Cardiac septum (tissue), 1 donor: ENCODE measurements at regions of chr1 and their contacts with region 1.

Region 1: DNA sequence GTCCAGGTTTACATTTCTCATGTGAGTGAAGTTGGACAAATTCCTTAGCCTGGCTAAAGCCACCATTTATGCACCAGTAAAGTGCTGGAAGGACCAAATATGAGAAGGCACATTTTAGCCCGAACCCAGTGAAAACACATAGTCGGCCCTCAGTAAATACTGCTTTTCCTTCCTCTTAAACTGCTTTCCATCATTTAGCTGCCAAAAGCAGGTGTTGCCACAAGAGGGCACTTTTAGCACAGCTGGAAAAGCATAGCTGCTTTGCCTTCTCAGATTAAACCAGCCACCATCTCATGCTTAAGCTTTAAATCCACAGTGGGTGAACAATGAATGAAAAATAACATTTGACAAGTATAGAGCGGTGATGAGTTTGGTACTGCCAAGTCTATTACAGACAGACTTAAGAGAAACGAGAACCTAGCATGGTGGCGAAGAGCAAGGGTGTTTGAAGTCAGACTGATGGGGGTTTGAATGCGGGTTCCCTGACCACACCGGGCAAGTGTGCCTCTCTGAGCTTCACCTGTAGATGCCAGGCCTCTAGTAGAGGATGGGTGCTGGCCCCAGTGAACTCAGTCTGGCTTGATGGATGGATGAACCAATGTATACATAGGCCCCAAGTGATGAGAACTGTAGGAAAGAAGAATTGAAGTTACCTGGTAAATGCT is 57.8 kb downstream of the SLC35D1 start:
- DNase-seq: no peak

Region 2: GRCh38 chr1:67149179-67149770 is 153.1 kb after region 1 on chr1:
- intact Hi-C with region 1: loop called (anchors 1 kb)
- DNase-seq: no peak

Region 3: DNA sequence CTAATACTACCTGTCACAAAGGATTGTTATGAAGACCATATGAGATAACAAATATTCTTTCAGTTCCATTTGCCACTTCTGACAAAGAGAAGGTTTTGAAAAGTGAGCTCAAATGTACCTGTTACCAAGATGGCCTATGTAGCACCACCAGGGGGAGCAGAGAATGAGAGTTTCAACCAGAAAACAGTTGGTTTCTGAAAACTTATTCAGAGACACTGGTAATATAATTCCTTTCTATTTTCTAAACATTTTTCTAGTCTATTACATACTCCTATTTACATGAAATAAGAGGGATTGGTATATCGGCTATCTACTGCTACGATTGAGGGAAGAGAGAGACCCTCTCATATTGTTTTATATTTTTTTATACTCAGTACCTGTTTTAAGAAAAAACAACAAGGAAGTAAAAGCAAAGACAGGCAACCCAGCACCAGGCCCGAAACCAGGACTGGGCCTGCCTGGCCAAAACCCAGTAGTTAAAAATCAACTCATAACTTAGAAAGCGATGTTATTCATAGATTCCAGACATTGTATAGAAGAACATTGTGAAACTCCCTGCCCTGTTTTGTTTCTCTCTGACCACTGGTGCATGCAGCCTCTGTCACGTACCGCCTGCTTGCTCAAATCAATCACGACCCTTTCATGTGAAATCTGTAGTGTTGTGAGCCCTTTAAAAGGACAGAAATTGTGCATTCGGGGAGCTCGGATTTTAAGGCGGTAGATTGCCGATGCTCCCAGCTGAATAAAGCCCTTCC is 218.4 kb after region 1 on chr1:
- intact Hi-C with region 1: loop called (anchors 5 kb)
- DNase-seq: no peak